B cell (primary cell): ENCODE measurements at regions of chr17 and their contacts with region 1.

Region 1: GRCh38 chr17:7454980-7455379 is 10.1 kb downstream of the CHRNB1 start:
- DNase-seq: no peak
- ATAC-seq: no peak
- H3K4me3 ChIP-seq: peak overlapping the region; percentile 55 to 99 (median 90)
- H3K4me3 Mint-ChIP-seq: peak overlapping the region; percentile 91
- H3K27ac ChIP-seq: no peak overlapping the region
- H3K27ac Mint-ChIP-seq: peak overlapping the region; percentile 81
- H3K4me1 ChIP-seq: peaks cover 5 to 10% of the 10 kb centered on the region in 2 donors
- H3K4me1 Mint-ChIP-seq: peaks cover 11% of the 10 kb centered on the region
- H3K27me3 ChIP-seq: no peaks in the 10 kb centered on the region
- H3K27me3 Mint-ChIP-seq: peaks cover 4% of the 10 kb centered on the region
- CTCF ChIP-seq: no peak

Region 2: DNA sequence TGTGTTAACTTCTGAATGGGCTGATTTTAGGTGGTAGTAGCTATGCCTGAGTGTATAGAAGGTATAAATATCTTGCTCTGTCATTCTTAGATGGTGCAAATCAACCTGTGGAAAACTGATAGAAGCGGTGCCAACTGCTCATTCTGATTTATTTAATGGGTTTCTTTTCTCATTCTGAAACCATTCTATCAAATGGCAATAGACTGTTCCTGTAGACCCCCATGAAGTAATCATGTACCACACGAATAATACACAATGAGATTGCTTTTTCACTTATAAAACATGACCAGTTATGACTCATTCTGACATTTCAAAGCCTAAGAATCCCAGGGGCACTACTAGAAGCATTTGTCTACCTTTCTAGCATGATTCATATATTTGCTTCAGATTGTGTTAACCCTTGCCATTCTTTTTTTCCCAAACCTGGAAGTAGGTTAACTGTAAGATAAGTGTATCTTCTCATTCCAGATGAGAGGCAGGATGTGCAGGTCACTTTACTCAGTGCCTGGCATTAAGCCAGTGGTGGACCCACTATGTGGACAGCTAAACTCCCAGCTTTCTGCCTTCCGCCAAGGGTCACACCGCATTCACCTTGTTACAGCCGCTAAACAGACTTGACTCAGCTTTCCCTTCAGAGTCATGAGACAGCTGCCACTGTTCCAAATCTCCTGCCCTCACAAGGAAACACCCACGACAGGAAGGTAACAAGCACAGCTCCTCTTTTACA is 394.7 kb before region 1 on chr17:
- CTCF ChIA-PET with region 1: no interaction called
- POLR2A ChIA-PET with region 1: no interaction called
- intact Hi-C with region 1: no loop called
- DNase-seq: no peak
- ATAC-seq: no peak
- H3K4me3 ChIP-seq: no peak overlapping the region
- H3K4me3 Mint-ChIP-seq: no peak overlapping the region
- H3K27ac ChIP-seq: no peak overlapping the region
- H3K27ac Mint-ChIP-seq: peak overlapping the region; percentile 56
- H3K4me1 ChIP-seq: no peaks in the 10 kb centered on the region
- H3K4me1 Mint-ChIP-seq: no peaks in the 10 kb centered on the region
- H3K27me3 ChIP-seq: peaks cover 0 to 10% (median 3%) of the 10 kb centered on the region in 4 experiments
- H3K27me3 Mint-ChIP-seq: peaks cover 27% of the 10 kb centered on the region
- CTCF ChIP-seq: no peak

Region 3: DNA sequence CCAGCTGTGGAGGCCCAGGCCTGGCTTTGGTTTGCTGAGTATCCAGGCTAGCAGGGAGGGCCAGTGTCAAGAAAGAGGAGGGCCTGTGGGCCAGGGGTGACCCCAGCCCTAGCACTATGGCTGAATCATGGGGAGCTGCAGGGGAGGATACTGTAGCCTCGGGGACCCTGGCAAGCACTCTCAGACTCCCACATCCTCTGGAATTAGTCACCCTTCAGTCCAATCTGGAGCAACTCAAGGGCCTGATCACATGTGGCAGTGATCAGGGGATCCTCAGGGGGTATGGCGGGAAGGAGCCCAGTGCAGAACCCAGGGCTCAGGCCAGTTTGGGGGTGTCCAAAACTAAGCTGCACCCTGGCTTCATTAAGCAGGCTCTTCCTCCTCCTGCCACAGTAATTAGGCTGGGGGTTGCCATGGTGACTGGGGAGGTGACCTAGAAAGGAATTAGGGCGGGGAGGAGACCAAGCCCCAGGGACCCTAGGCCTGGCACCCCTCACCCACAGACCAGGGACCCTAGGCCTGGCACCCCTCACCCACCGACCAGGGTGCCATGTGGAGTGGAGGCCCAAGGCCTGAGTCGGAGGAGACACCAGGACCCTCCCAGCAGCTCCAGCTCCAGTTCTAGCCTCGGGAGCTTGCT is 41.5 kb before region 1 on chr17:
- CTCF ChIA-PET with region 1: no interaction called
- POLR2A ChIA-PET with region 1: no interaction called
- intact Hi-C with region 1: no loop called
- DNase-seq: no peak
- ATAC-seq: no peak
- H3K4me3 ChIP-seq: no peak overlapping the region
- H3K4me3 Mint-ChIP-seq: no peak overlapping the region
- H3K27ac ChIP-seq: no peak overlapping the region
- H3K27ac Mint-ChIP-seq: no peak overlapping the region
- H3K4me1 ChIP-seq: peaks cover 0 to 4% of the 10 kb centered on the region in 2 donors
- H3K4me1 Mint-ChIP-seq: peaks cover 2% of the 10 kb centered on the region
- H3K27me3 ChIP-seq: peaks cover 0 to 13% (median 0%) of the 10 kb centered on the region in 4 experiments
- H3K27me3 Mint-ChIP-seq: peaks cover 22% of the 10 kb centered on the region
- CTCF ChIP-seq: no peak

Region 4: GRCh38 chr17:7444682-7445618 is 10.0 kb before region 1 on chr17 and contains the start of gene CHRNB1:
- CTCF ChIA-PET with region 1: interaction called, 15 read pairs
- POLR2A ChIA-PET with region 1: interaction called, 8 read pairs
- intact Hi-C with region 1: no loop called
- DNase-seq: peak; percentile 58
- ATAC-seq: peak; percentile 46
- H3K4me3 ChIP-seq: peak within 1 kb of the TSS in 4 of 5 experiments; percentile 31 to 53 (median 42)
- H3K4me3 Mint-ChIP-seq: peak within 1 kb of the TSS; percentile 84
- H3K27ac ChIP-seq: no peak within 1 kb of the TSS
- H3K27ac Mint-ChIP-seq: peak within 1 kb of the TSS; percentile 15
- H3K4me1 ChIP-seq: peaks cover 33 to 40% of the 10 kb centered on the region in 2 donors
- H3K4me1 Mint-ChIP-seq: peaks cover 29% of the 10 kb centered on the region
- H3K27me3 ChIP-seq: peaks cover 0 to 78% (median 51%) of the 10 kb centered on the region in 4 experiments
- H3K27me3 Mint-ChIP-seq: peaks cover 71% of the 10 kb centered on the region
- CTCF ChIP-seq: no peak
- total RNA-seq, gene CHRNB1: 6.2 and 6.6 TPM in 2 replicates